ENCODE measurements at regions of chr11 and their contacts with region 1.

Region 1: DNA sequence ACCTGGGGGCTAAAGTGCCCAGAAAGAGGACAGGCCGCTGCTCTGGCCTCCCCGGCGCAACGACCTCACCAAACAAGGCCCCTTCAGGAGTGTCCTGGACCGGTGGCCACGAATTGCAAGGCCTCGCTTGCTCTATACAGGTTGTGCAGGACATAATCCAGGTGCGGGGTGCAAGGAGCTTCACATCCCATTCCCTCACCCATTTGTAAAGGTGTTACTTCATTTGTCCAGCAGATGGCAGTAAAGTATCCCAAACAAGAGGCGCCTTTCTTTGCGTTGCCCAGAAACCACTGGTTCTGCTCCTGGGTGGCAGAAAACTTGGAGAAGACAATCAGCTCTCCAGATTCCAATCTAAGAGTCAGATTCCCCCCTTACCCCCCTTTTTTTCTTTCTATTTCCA is 35.9 kb upstream of the PRDM11 start:
- DNase-seq: no peak
- ATAC-seq: peak; percentile 78

Region 2: DNA sequence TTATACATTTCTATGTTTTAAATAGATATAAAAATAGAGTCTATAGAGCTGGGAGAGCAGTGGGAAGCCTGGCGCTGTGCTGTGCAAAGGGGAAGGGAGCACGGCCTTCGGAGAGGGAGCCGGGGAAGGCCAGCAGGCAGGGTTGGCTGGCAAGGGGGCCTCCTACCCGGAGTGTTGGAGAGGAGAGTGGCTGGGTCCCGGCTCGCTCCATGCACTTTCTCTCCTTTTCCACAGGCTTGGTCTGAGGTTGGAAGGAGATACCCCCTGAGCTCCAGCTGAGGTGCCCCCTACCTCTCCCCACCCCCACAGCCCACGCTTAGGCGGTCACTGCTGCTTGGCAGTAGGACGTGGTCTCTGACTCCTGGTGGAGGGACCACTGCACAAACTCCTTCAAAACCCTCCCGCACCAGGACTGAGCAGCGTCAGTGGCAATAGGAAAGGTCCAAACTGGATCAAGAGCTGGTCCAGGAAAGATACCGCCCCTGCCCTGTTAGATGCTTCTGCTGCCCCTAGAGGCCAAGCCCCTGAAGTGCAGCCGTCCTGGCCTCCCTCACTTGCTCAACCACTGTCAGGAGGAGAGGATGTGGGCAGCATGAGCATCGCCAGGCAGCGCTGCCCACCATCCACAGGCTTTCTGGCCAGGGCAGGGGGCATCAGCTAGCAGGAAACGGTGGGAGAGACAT is 122.7 kb after region 1 on chr11:
- intact Hi-C with region 1: loop called (anchors 5 kb)
- DNase-seq: peak; percentile 77
- ATAC-seq: peak; percentile 82

Region 3: GRCh38 chr11:45289369-45289768 is 178.8 kb after region 1 on chr11:
- intact Hi-C with region 1: loop called (anchors 1 kb)
- DNase-seq: no peak
- ATAC-seq: no peak

Region 4: DNA sequence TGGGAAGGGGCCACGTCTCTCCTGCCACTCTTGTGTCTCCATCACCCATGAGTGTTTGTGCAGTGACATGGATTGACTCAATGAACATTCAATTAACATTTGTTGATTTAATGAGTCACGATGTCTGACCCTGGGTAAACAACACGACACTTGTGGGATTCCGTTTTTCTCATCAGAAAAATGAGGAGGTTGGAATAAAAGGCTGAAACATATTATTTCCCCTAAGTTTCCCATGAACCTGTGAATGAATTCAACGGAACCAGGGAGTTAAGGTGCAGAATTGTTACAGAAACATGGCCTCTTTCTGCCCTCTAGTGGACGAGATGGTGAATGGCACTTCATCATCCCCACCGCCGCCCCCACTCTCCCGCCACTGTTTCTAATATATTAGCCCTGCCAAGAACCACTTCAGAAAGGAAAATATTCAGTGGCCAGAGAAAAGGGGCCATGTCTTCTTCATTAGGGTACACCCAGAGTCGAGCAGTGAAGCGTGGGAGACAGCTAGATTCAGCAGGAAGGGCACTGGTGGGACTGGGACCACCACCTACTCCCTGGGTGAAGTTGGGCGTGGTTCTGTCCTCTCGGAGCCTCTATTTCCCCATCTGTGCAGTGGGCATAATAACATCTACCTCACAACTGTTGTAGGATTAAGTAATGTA is 221.8 kb after region 1 on chr11:
- intact Hi-C with region 1: loop called (anchors 2 kb)
- DNase-seq: no peak
- ATAC-seq: peak; percentile 85